ENCODE measurements at regions of chr19 and their contacts with region 1.

Region 1: GRCh38 chr19:10717356-10718204 is at the start of gene DNM2:
- DNase-seq: peak; percentile 100
- H3K4me3 ChIP-seq: peak within 1 kb of the TSS; percentile 63 to 99 (median 97)
- H3K27ac ChIP-seq: peak within 1 kb of the TSS; percentile 31
- H3K4me1 ChIP-seq: peaks cover 12% of the 10 kb centered on the region
- H3K27me3 ChIP-seq: no peaks in the 10 kb centered on the region
- CTCF ChIP-seq: peak; percentile 82 to 88
- total RNA-seq, gene DNM2: 95.9 to 125 TPM

Region 2: GRCh38 chr19:10769533-10770491 is 52.2 kb after region 1 on chr19:
- CTCF ChIA-PET with region 1: interaction called, 7 read pairs
- dilution Hi-C with region 1: no loop called
- in situ Hi-C with region 1: no loop called
- intact Hi-C with region 1: loop called (anchors 5 kb)
- DNase-seq: no peak
- H3K4me3 ChIP-seq: no peak overlapping the region
- H3K27ac ChIP-seq: no peak overlapping the region
- H3K4me1 ChIP-seq: peaks cover 5% of the 10 kb centered on the region
- H3K27me3 ChIP-seq: no peaks in the 10 kb centered on the region
- CTCF ChIP-seq: no peak

Region 3: DNA sequence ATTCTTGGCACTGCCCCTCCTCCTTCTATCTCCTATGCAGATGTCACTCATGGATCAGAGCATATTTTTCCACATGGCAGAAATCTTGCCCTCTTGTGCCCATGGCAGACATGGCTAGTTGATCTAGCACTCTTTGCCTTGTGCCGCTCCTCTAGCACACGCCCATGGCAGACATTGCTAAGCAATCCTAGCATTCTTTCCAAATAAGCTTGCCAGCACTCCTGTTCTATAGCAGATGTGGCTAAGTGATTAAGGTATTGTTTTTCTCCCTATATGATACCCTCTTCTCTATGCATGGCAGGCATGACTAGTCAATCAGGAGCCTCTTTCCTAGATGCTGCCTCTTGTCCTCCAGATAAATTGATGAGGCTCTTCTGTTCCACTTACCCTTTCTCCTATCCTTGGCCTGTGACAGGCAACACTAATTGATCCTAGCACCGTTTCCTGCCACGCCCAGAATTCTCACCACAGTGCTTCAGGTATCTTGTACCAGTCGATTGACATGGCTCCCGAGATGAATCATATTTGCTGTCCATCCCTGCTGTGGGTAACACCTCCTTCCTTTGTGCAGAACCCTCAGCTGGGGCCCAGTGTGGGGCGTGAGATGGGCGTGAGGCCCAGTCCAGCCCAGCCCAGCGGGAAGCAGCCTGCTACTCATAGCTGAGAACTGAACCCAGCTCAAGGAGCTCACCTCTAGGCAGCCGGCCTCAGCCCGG is 91.5 kb after region 1 on chr19:
- CTCF ChIA-PET with region 1: no interaction called
- dilution Hi-C with region 1: no loop called
- in situ Hi-C with region 1: no loop called
- intact Hi-C with region 1: loop called (anchors 1 kb)
- DNase-seq: peak; percentile 72
- H3K4me3 ChIP-seq: no peak overlapping the region
- H3K27ac ChIP-seq: peak overlapping the region; percentile 2
- H3K4me1 ChIP-seq: peaks cover 21% of the 10 kb centered on the region
- H3K27me3 ChIP-seq: no peaks in the 10 kb centered on the region
- CTCF ChIP-seq: no peak

Region 4: DNA sequence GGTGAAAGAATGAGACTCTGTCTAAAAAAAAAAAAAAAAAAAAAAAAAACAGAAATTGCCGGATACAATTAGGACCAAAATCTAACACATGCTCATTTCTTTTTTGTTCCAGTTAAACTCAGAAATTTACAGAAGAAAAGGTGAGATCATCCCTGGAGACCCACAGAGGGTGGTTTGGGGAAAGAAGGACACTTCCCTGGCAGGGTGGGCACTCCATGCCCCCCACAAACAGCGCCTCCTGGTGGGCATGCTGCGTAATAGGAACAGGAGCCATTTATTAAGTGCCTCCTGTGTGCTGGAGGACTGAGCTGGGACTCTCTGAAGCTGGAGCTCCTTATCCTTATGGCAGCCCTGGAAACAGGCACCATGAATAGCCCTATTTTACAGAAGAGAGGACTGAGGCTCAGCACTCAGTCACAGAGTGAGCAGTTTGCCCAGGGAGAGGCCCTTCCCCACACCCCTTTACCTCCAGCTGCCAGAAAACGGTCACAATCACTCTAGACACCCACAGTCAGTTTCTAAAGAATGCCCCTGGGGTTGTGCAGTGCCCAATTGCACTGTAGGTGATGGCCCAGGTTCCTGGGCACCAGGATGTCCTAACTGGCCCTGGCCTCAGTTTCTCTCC is 140.7 kb after region 1 on chr19:
- CTCF ChIA-PET with region 1: interaction called, 7 read pairs
- dilution Hi-C with region 1: no loop called
- in situ Hi-C with region 1: loop called (anchors 5 to 10 kb)
- intact Hi-C with region 1: loop called (anchors 1 kb)
- DNase-seq: no peak
- H3K4me3 ChIP-seq: no peak overlapping the region
- H3K27ac ChIP-seq: no peak overlapping the region
- H3K4me1 ChIP-seq: no peaks in the 10 kb centered on the region
- H3K27me3 ChIP-seq: no peaks in the 10 kb centered on the region
- CTCF ChIP-seq: peak; percentile 69 to 76

Region 5: GRCh38 chr19:10864538-10864899 is 146.9 kb after region 1 on chr19:
- CTCF ChIA-PET with region 1: interaction called, 20 read pairs
- dilution Hi-C with region 1: no loop called
- in situ Hi-C with region 1: loop called (anchors 5 to 10 kb)
- intact Hi-C with region 1: loop called (anchors 1 kb)
- DNase-seq: peak; percentile 47
- H3K4me3 ChIP-seq: no peak overlapping the region
- H3K27ac ChIP-seq: no peak overlapping the region
- H3K4me1 ChIP-seq: peaks cover 4% of the 10 kb centered on the region
- H3K27me3 ChIP-seq: no peaks in the 10 kb centered on the region
- CTCF ChIP-seq: peak; percentile 93 to 95

Measured in mammary epithelial cell (primary cell).